ENCODE measurements at regions of chr10 and their contacts with region 1.

Region 1: DNA sequence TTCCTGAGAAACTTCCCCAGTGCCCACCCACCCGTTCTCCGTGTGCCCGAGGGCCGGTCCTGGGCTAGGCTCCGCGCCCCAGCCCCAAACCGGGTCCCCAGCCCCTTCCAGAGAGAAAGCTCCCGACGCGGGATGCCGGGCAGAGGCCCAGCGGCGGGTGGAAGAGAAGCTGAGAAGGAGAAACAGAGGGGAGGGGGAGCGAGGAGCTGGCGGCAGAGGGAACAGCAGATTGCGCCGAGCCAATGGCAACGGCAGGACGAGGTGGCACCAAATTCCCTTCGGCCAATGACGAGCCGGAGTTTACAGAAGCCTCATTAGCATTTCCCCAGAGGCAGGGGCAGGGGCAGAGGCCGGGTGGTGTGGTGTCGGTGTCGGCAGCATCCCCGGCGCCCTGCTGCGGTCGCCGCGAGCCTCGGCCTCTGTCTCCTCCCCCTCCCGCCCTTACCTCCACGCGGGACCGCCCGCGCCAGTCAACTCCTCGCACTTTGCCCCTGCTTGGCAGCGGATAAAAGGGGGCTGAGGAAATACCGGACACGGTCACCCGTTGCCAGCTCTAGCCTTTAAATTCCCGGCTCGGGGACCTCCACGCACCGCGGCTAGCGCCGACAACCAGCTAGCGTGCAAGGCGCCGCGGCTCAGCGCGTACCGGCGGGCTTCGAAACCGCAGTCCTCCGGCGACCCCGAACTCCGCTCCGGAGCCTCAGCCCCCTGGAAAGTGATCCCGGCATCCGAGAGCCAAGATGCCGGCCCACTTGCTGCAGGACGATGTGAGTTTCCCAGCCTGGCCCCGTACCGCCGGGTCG is at the start of gene SCD:
- DNase-seq: peak; percentile 83 to 86 (median 83)
- H3K4me3 ChIP-seq: peak within 1 kb of the TSS; percentile 52
- H3K27ac ChIP-seq: peak within 1 kb of the TSS; percentile 77 to 79
- H3K4me1 ChIP-seq: peaks cover 1% of the 10 kb centered on the region
- H3K27me3 ChIP-seq: no peaks in the 10 kb centered on the region
- CTCF ChIP-seq: no peak
- EP300 ChIP-seq: no peak
- POLR2A ChIP-seq: peak; percentile 65
- total RNA-seq, gene SCD: 21.6 to 302 (median 72.7) TPM

Region 2: GRCh38 chr10:100391163-100392002 is 44.4 kb after region 1 on chr10:
- intact Hi-C with region 1: loop called in 1 of 4 experiments (anchors 5 kb)
- DNase-seq: no peak
- H3K4me3 ChIP-seq: no peak overlapping the region
- H3K27ac ChIP-seq: peak overlapping the region; percentile 51 to 72
- H3K4me1 ChIP-seq: peaks cover 16% of the 10 kb centered on the region
- H3K27me3 ChIP-seq: no peaks in the 10 kb centered on the region
- CTCF ChIP-seq: no peak
- EP300 ChIP-seq: no peak
- POLR2A ChIP-seq: no peak

Measured in ovary (tissue), 10 donors.